BJ (cell line): ENCODE measurements at regions of chr6 and their contacts with region 1.

Region 1: DNA sequence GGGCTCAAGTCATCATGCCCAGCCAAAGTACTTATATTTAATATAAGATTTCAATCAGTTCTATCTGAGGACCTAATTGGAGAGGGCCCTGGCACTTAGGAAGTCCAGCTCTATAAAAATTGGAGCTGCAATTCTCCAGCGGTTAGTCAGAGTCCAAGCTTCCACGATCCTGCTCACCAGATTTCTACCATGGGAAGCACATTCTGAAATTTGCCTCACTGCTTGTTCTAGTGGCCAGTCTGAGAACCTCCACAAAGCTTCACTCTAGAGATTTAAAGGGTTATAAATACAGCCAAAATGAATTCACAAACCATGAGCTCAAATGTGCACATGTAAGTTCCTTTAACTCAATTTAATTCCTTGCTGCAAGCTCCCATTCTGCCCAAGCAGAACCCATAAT is 33.5 kb downstream of the PNLDC1 start:
- DNase-seq: peak; percentile 65
- H3K4me3 ChIP-seq: no peak overlapping the region
- H3K27me3 ChIP-seq: no peaks in the 10 kb centered on the region
- CTCF ChIP-seq: peak; percentile 52

Region 2: GRCh38 chr6:159821726-159822125 is 11.8 kb before region 1 on chr6:
- CTCF ChIA-PET with region 1: interaction called, 14 read pairs
- POLR2A ChIA-PET with region 1: no interaction called
- DNase-seq: no peak
- H3K4me3 ChIP-seq: no peak overlapping the region
- H3K27me3 ChIP-seq: peaks cover 8% of the 10 kb centered on the region
- CTCF ChIP-seq: no peak

Region 3: GRCh38 chr6:159844737-159845645 is 11.4 kb after region 1 on chr6:
- CTCF ChIA-PET with region 1: no interaction called
- POLR2A ChIA-PET with region 1: no interaction called
- DNase-seq: no peak
- H3K4me3 ChIP-seq: no peak overlapping the region
- H3K27me3 ChIP-seq: no peaks in the 10 kb centered on the region
- CTCF ChIP-seq: no peak

Region 4: GRCh38 chr6:159890792-159891191 is 57.2 kb after region 1 on chr6 and contains the start of gene MAS1:
- CTCF ChIA-PET with region 1: no interaction called
- POLR2A ChIA-PET with region 1: no interaction called
- DNase-seq: no peak
- H3K4me3 ChIP-seq: no peak within 1 kb of the TSS
- H3K27me3 ChIP-seq: peaks cover 51% of the 10 kb centered on the region
- CTCF ChIP-seq: no peak
- polyA plus RNA-seq, gene MAS1: not detected in 2 replicates